ENCODE measurements at regions of chr15 and their contacts with region 1.

Region 1: DNA sequence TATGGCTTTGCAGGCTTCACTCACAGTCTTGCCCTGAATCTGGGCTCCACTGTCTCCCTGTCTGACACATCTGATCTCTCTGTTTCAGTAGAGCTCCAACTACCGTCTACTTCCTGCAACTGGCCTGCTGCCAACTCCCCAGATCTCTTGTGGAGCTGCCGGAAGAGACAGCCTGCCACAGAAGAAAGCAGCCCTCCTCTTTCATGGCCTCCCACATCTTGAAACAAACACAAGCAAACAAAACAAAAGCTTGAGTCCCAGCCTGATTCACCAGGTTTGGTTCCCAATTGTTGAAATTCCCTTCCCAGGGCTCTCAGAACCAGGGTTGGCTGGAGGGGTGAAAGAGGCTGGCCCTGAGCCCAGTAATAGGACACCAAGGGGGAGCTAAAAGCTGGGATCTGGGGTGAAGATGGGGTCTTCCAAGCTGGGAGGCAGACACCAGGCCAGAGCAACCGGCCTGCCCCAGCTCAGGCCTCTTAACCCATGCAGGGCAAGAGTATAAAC is 55.3 kb upstream of the CA12 start:
- DNase-seq: peak; percentile 71 to 96
- H3K4me3 ChIP-seq: no peak overlapping the region
- CTCF ChIP-seq: no peak
- POLR2A ChIP-seq: no peak

Region 2: GRCh38 chr15:62983956-62984355 is 453.0 kb before region 1 on chr15:
- intact Hi-C with region 1: loop called (anchors 5 kb)
- DNase-seq: no peak
- H3K4me3 ChIP-seq: no peak overlapping the region
- CTCF ChIP-seq: no peak
- POLR2A ChIP-seq: no peak

Region 3: GRCh38 chr15:62995047-62995674 is 441.8 kb before region 1 on chr15:
- intact Hi-C with region 1: no loop called
- DNase-seq: no peak
- H3K4me3 ChIP-seq: no peak overlapping the region
- CTCF ChIP-seq: no peak
- POLR2A ChIP-seq: no peak

Region 4: GRCh38 chr15:64667736-64668161 is 1230.8 kb after region 1 on chr15:
- intact Hi-C with region 1: no loop called
- DNase-seq: no peak
- H3K4me3 ChIP-seq: no peak overlapping the region
- CTCF ChIP-seq: no peak
- POLR2A ChIP-seq: no peak

Measured in lower leg skin (tissue), 4 donors.